Naive thymus-derived CD4-positive, alpha-beta T cell (primary cell): ENCODE measurements at regions of chr19 and their contacts with region 1.

Region 1: GRCh38 chr19:29761575-29762232 is 46.6 kb upstream of the C19orf12 start:
- DNase-seq: no peak
- ATAC-seq: no peak
- H3K4me3 ChIP-seq: no peak overlapping the region
- H3K4me3 Mint-ChIP-seq: no peak overlapping the region
- H3K27ac ChIP-seq: no peak overlapping the region
- H3K27ac Mint-ChIP-seq: peak overlapping the region in 1 of 9 donors; percentile 30
- H3K4me1 ChIP-seq: no peaks in the 10 kb centered on the region
- H3K4me1 Mint-ChIP-seq: peaks cover 0 to 3% (median 0%) of the 10 kb centered on the region in 7 donors
- H3K27me3 ChIP-seq: no peaks in the 10 kb centered on the region
- H3K27me3 Mint-ChIP-seq: peaks cover 0 to 8% (median 0%) of the 10 kb centered on the region in 5 donors

Region 2: DNA sequence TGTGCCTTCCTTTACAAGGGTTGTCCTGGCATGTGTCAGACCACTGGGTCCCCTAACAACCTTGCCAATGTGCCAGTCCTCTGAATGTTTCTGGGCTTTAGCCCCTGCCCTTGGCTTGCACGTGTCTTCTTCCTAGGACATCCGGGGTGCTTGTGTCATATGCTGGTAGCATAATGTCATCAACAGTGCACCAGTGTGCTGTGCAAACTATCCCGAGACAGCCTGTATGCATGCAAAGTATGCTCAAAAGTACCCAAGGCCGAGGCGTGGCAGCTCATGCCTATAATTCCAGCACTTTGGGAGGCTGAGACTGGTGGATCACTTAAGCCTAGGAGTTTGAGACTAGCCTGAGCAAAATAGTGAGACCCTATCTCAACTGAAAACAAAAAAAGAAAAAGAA is 25.9 kb before region 1 on chr19:
- CTCF ChIA-PET with region 1: interaction called, 12 read pairs
- POLR2A ChIA-PET with region 1: no interaction called
- intact Hi-C with region 1: loop called in 1 of 2 experiments (anchors 1 kb)
- DNase-seq: no peak
- ATAC-seq: no peak
- H3K4me3 ChIP-seq: no peak overlapping the region
- H3K4me3 Mint-ChIP-seq: no peak overlapping the region
- H3K27ac ChIP-seq: no peak overlapping the region
- H3K27ac Mint-ChIP-seq: no peak overlapping the region
- H3K4me1 ChIP-seq: no peaks in the 10 kb centered on the region
- H3K4me1 Mint-ChIP-seq: no peaks in the 10 kb centered on the region
- H3K27me3 ChIP-seq: no peaks in the 10 kb centered on the region
- H3K27me3 Mint-ChIP-seq: peaks cover 0 to 16% (median 0%) of the 10 kb centered on the region in 5 donors

Region 3: DNA sequence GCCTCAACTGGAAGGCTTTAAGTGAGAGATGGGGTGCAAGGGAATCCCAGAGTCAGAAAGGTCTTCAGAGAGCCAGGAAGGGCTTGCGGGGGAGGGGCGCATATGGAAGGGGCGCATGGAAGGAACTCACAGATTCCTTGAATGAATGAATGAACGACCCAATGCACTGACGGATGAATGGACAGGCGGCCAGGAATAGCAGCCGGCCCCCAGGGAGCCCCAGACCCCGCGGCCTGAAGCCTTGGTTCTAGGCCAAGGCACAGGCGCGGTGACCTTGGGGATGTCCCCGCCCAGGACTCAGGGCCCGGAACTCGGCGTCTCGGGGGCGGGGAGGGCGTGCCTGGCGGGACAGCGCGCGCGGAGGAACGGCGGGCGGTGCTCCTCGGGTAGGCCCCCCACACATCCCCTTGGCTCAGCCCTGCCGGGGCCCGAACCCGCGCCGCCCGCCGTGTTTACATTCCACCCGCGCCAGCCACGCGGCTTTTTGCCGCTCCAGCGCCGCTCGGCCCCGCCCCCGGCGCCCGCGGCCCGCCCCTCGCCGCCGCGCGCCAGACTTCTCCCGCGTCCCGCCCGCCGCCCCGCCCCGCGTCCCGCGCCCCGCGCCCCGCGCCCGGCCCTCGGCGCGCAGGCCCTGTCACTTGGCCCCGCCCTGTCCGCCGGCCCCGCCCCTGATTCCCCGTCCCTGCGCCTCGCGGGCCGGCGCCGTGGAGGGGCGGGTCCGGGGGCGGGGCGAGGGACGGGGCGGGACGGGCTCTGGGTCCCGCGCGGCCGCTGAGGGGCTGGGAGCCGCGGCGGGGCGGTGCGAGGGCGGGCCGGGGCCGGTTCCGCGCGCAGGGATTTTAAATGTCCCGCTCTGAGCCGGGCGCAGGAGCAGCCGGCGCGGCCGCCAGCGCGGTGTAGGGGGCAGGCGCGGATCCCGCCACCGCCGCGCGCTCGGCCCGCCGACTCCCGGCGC is 49.7 kb after region 1 on chr19 and contains the start of gene CCNE1:
- CTCF ChIA-PET with region 1: no interaction called
- POLR2A ChIA-PET with region 1: no interaction called
- intact Hi-C with region 1: loop called in 1 of 2 experiments (anchors 1 kb)
- DNase-seq: peak; percentile 85 to 98 (median 91)
- ATAC-seq: peak; percentile 98
- H3K4me3 ChIP-seq: peak within 1 kb of the TSS; percentile 48
- H3K4me3 Mint-ChIP-seq: peak within 1 kb of the TSS; percentile 83 to 96 (median 90)
- H3K27ac ChIP-seq: peak within 1 kb of the TSS; percentile 69
- H3K27ac Mint-ChIP-seq: peak within 1 kb of the TSS; percentile 56 to 94 (median 85)
- H3K4me1 ChIP-seq: no peaks in the 10 kb centered on the region
- H3K4me1 Mint-ChIP-seq: peaks cover 0 to 36% (median 11%) of the 10 kb centered on the region in 7 donors
- H3K27me3 ChIP-seq: no peaks in the 10 kb centered on the region
- H3K27me3 Mint-ChIP-seq: no peaks in the 10 kb centered on the region
- total RNA-seq, gene CCNE1: 5.3 to 36.1 (median 6.6) TPM

Region 4: DNA sequence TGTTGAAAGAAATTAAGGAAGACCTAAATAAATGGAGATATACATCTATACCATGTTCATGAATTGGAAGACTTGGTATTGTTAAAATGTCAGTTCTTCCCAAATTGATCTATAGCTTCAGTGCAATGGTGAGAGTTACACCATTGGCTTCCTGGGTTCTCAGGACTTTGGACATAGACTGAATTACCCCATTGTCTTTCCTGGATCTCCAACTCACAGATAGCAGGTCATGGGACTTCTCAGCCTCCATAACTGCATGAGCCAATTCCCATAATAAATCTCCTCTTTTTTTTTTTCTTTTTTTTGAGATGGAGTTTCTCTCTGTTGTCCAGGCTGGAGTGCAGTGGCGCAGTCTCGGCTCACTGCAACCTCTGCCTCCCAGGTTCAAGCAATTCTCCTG is 88.8 kb after region 1 on chr19:
- CTCF ChIA-PET with region 1: interaction called, 12 read pairs
- POLR2A ChIA-PET with region 1: interaction called, 4 read pairs
- intact Hi-C with region 1: loop called in 1 of 2 experiments (anchors 1 kb)
- DNase-seq: no peak
- ATAC-seq: no peak
- H3K4me3 ChIP-seq: no peak overlapping the region
- H3K4me3 Mint-ChIP-seq: no peak overlapping the region
- H3K27ac ChIP-seq: no peak overlapping the region
- H3K27ac Mint-ChIP-seq: no peak overlapping the region
- H3K4me1 ChIP-seq: peaks cover 0 to 5% of the 10 kb centered on the region in 2 donors
- H3K4me1 Mint-ChIP-seq: peaks cover 6 to 19% (median 7%) of the 10 kb centered on the region in 7 donors
- H3K27me3 ChIP-seq: no peaks in the 10 kb centered on the region
- H3K27me3 Mint-ChIP-seq: no peaks in the 10 kb centered on the region